Common myeloid progenitor, CD34-positive (primary cell): ENCODE measurements at regions of chr17 and their contacts with region 1.

Region 1: GRCh38 chr17:58112970-58113631 is 29.9 kb downstream of the DYNLL2 start:
- DNase-seq: peak; percentile 75 to 87 (median 81)
- H3K4me3 ChIP-seq: no peak overlapping the region
- H3K27ac ChIP-seq: no peak overlapping the region
- H3K4me1 ChIP-seq: no peaks in the 10 kb centered on the region
- H3K27me3 ChIP-seq: peaks cover 0 to 21% (median 0%) of the 10 kb centered on the region in 5 experiments

Region 2: GRCh38 chr17:58096892-58097291 is 16.2 kb before region 1 on chr17:
- CTCF ChIA-PET with region 1: interaction called, 15 read pairs
- POLR2A ChIA-PET with region 1: no interaction called
- DNase-seq: no peak
- H3K4me3 ChIP-seq: no peak overlapping the region
- H3K27ac ChIP-seq: no peak overlapping the region
- H3K4me1 ChIP-seq: no peaks in the 10 kb centered on the region
- H3K27me3 ChIP-seq: no peaks in the 10 kb centered on the region